PC-3 (cell line): ENCODE measurements at regions of chr7 and their contacts with region 1.

Region 1: GRCh38 chr7:74334030-74334429 is 44.8 kb downstream of the CLIP2 start:
- DNase-seq: peak; percentile 4
- ATAC-seq: no peak
- H3K4me3 ChIP-seq: no peak overlapping the region
- H3K27ac ChIP-seq: no peak overlapping the region
- H3K4me1 ChIP-seq: no peaks in the 10 kb centered on the region
- H3K27me3 ChIP-seq: no peaks in the 10 kb centered on the region
- CTCF ChIP-seq: no peak

Region 2: DNA sequence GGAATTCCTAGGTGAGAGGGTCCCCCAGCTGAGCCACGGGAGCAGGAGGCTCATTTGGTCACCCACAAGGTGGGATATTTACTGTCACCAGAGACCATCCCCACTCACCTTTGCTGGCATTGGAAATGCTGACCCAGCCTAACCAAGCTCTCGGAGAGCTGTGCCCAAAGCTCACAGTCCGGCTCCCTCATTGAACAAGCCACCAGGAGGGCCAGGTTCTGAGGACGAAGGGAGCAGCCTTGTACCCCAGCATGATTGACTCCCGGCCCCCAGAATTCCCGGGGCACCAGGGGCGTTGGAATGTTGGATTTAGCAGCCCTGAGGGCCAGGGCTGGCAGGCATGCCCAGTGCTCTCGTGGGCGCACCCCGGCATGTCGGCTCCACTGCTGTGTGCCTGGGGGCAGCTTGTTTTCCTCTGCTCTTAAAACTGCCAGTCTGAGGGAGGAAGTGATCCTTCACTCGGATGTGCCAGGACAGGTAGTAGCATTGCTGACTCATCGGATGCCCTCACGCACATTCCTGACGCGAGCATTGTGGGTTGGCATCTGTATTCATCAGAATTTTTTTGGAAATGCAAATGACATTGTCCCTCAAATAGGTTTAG is 21.5 kb before region 1 on chr7:
- CTCF ChIA-PET with region 1: no interaction called
- POLR2A ChIA-PET with region 1: interaction called, 10 read pairs
- intact Hi-C with region 1: no loop called
- DNase-seq: peak; percentile 95
- ATAC-seq: peak; percentile 84
- H3K4me3 ChIP-seq: peak overlapping the region; percentile 50; the same call in 1 of the 2 replicates
- H3K27ac ChIP-seq: peak overlapping the region; percentile 99
- H3K4me1 ChIP-seq: peaks cover 31% of the 10 kb centered on the region
- H3K27me3 ChIP-seq: no peaks in the 10 kb centered on the region
- CTCF ChIP-seq: no peak